ENCODE measurements at regions of chr11 and their contacts with region 1.

Region 1: GRCh38 chr11:43282607-43283440 is 29.0 kb upstream of the API5 start:
- DNase-seq: peak; percentile 10
- ATAC-seq: peak; percentile 75
- H3K4me3 ChIP-seq: peak overlapping the region in 1 of 2 experiments; percentile 21; a peak in 2 of 4 replicates
- H3K27ac ChIP-seq: no peak overlapping the region
- H3K4me1 ChIP-seq: 0 out of 2 replicates have a peak, but pooled peaks cover 4% of the 10 kb centered on the region
- H3K27me3 ChIP-seq: 0 out of 2 replicates have a peak, but pooled peaks cover 2% of the 10 kb centered on the region
- CTCF ChIP-seq: peak; percentile 96

Region 2: DNA sequence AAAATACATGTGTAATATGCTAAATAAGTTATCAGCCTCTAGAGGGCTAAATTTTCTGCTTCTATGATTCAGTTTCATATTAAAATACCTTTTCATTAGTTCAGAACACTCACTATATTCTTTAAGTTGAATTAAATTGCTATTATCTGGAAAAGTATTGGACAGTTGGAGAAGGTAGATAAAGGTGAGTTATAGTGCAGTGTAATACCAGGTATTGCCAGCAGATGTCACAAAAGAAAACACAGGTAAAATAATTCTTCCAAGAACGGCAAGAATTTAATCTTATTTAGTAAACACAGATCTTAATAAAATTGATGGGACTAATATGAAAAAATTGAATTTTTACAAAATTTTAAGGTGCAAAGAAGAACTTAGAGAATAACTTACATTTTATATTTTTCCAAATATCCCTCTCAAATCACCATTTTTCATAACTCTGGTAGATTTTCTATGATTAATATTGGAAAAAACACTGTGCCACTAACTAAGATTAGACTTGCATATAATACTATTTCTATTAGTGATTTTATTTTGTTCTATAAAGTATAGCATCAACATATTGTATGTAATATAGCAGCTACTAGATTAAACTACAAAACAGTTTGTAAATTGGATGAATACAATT is 1821.7 kb before region 1 on chr11:
- CTCF ChIA-PET with region 1: no interaction called
- POLR2A ChIA-PET with region 1: no interaction called
- in situ Hi-C with region 1: no loop called
- intact Hi-C with region 1: loop called (anchors 10 kb)
- DNase-seq: peak; percentile 5
- ATAC-seq: no peak
- H3K4me3 ChIP-seq: no peak overlapping the region
- H3K27ac ChIP-seq: no peak overlapping the region
- H3K4me1 ChIP-seq: no peaks in the 10 kb centered on the region
- H3K27me3 ChIP-seq: peaks cover 4% of the 10 kb centered on the region; the same call in 1 of the 2 replicates
- CTCF ChIP-seq: peak; percentile 69; the same call in 1 of the 2 replicates

Region 3: DNA sequence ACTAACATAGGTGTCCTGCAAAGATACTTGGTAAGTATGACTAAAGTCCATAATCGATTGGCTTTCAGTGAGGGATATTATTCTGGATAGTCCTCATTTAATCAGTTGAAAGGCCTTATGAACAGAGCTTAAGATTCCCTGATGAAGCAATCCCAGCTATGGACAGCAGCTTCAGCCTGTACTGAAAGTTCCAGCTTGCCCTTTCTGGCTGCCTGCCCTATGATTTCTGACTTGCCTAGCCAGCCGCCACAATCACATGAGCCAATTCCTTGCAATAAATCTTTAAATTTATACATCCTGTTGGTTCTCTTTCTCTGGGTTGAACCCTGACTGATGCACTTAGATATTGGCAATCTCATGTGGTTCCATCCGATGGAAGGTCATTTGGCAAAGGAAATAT is 730.0 kb before region 1 on chr11:
- CTCF ChIA-PET with region 1: no interaction called
- POLR2A ChIA-PET with region 1: no interaction called
- in situ Hi-C with region 1: no loop called
- intact Hi-C with region 1: loop called (anchors 10 kb)
- DNase-seq: no peak
- ATAC-seq: no peak
- H3K4me3 ChIP-seq: no peak overlapping the region
- H3K27ac ChIP-seq: no peak overlapping the region
- H3K4me1 ChIP-seq: no peaks in the 10 kb centered on the region
- H3K27me3 ChIP-seq: no peaks in the 10 kb centered on the region
- CTCF ChIP-seq: no peak

Region 4: GRCh38 chr11:42770444-42771065 is 512.3 kb before region 1 on chr11:
- CTCF ChIA-PET with region 1: interaction called, 3 read pairs
- POLR2A ChIA-PET with region 1: no interaction called
- in situ Hi-C with region 1: no loop called
- intact Hi-C with region 1: loop called (anchors 2 kb)
- DNase-seq: peak; percentile 8
- ATAC-seq: no peak
- H3K4me3 ChIP-seq: no peak overlapping the region
- H3K27ac ChIP-seq: no peak overlapping the region
- H3K4me1 ChIP-seq: no peaks in the 10 kb centered on the region
- H3K27me3 ChIP-seq: no peaks in the 10 kb centered on the region
- CTCF ChIP-seq: peak; percentile 61; the same call in 1 of the 2 replicates

Region 5: DNA sequence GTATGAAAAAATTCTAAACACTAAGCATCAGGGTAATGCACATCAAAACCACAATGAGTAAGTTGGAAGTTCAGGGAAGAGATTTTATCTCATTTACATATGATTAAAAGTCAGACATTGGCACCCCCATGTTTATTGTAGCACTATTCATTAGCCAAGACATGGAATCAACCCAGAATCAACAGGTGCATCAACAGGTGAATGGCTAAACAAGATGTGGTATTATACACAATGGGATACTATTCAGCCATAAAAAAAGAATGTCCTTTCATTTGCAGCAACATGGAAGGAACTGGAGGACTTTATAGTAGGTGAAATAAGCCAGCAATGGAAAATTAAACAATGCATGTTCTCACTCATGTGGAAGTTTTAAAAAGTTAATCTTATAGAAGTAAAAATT is 58.3 kb after region 1 on chr11:
- CTCF ChIA-PET with region 1: no interaction called
- POLR2A ChIA-PET with region 1: no interaction called
- in situ Hi-C with region 1: no loop called
- intact Hi-C with region 1: no loop called
- DNase-seq: no peak
- ATAC-seq: no peak
- H3K4me3 ChIP-seq: no peak overlapping the region
- H3K27ac ChIP-seq: no peak overlapping the region
- H3K4me1 ChIP-seq: no peaks in the 10 kb centered on the region
- H3K27me3 ChIP-seq: no peaks in the 10 kb centered on the region
- CTCF ChIP-seq: no peak

Region 6: GRCh38 chr11:43381802-43382201 is 99.0 kb after region 1 on chr11:
- CTCF ChIA-PET with region 1: no interaction called
- POLR2A ChIA-PET with region 1: no interaction called
- in situ Hi-C with region 1: no loop called
- intact Hi-C with region 1: no loop called
- DNase-seq: no peak
- ATAC-seq: no peak
- H3K4me3 ChIP-seq: no peak overlapping the region
- H3K27ac ChIP-seq: no peak overlapping the region
- H3K4me1 ChIP-seq: no peaks in the 10 kb centered on the region
- H3K27me3 ChIP-seq: no peaks in the 10 kb centered on the region
- CTCF ChIP-seq: no peak

Region 7: DNA sequence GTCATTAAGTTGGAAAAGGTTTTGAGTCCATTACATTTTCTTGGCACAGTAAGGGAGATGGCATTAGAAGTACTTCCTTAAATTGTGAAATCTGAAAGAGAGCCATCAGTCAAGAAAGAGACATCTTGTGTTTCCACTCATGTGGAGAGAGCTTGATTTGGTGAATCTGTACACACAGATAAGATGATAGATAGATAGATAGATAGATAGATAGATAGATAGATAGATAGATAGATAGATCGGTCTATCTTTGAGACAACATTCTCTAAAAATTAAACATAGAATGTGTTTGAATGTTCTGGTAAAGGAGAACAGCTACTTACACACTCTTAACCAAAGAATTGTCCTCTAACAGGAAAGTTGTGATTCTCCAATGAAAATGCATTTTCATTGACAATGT is 152.1 kb after region 1 on chr11:
- CTCF ChIA-PET with region 1: no interaction called
- POLR2A ChIA-PET with region 1: no interaction called
- in situ Hi-C with region 1: no loop called
- intact Hi-C with region 1: no loop called
- DNase-seq: no peak
- ATAC-seq: no peak
- H3K4me3 ChIP-seq: no peak overlapping the region
- H3K27ac ChIP-seq: no peak overlapping the region
- H3K4me1 ChIP-seq: no peaks in the 10 kb centered on the region
- H3K27me3 ChIP-seq: no peaks in the 10 kb centered on the region
- CTCF ChIP-seq: no peak